ENCODE measurements at regions of chr12 and their contacts with region 1.

Region 1: DNA sequence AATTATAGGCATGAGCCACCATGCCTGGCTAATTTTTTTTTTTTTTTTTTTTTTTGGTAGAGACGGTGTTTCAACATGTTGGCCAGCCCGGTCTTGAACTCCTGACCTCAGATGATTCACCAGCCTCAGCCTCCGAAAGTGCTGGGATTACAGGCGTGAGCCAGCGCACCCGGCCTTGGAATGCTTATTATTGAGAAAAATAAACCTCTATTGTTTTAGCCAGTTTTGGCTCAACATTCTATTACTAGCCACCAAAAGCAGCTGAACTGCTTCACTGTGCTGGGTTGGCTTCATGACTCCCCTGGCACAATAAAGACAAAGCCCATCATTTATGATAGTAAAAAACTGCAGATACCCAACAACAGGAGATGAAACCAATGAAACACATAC is 93.5 kb upstream of the CEP83 start:
- DNase-seq: peak; percentile 71
- H3K27ac ChIP-seq: no peak overlapping the region
- CTCF ChIP-seq: no peak

Region 2: DNA sequence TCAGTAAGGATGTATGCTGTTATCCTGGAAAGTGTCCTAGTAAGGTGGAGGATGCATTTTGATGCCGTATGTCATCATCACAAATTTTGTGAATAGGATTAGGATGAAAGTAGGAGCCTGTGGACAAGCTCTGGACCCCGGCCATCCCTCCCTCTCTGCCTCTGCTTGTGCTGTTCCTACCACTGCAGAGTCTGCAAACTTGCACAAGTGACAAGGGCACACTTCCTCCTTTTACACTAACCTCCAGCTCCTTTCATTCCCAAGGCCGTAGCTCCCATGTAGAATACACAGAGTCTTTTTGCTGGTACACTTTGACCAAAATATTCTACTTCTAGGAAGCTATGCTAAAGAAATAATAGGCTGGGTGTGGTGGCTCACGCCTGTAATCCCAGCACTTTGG is 110.6 kb after region 1 on chr12:
- CTCF ChIA-PET with region 1: no interaction called
- POLR2A ChIA-PET with region 1: interaction called, 15 read pairs
- DNase-seq: no peak
- H3K27ac ChIP-seq: no peak overlapping the region
- CTCF ChIP-seq: no peak

Measured in RWPE1 (cell line).